GM10248 (cell line): ENCODE measurements at regions of chr12 and their contacts with region 1.

Region 1: DNA sequence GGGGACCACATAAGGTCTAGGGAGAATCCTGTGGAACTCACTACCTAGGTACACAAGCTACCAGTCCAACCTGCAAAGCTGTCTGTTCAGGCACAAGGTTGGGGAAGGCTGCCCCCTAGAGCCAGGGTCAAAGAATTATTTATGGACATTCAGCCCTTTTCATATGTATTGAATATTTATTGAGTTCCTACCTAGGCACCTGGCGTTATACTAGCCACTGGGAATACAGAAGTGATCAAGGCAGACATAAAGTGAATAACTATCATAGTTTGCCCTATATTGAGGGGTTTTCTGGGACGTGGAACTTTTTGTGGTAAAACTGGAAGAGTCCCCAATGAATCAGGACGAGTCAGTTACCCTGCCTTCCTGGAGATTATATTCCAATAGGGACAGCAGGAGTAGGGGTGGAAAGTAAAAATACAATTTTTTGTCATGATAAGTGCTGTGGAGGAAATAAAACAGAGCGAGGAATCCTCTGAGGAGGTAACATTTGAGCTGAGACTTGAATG is 5.8 kb upstream of the SLC48A1 start:
- DNase-seq: peak; percentile 71
- CTCF ChIP-seq: peak; percentile 83

Region 2: DNA sequence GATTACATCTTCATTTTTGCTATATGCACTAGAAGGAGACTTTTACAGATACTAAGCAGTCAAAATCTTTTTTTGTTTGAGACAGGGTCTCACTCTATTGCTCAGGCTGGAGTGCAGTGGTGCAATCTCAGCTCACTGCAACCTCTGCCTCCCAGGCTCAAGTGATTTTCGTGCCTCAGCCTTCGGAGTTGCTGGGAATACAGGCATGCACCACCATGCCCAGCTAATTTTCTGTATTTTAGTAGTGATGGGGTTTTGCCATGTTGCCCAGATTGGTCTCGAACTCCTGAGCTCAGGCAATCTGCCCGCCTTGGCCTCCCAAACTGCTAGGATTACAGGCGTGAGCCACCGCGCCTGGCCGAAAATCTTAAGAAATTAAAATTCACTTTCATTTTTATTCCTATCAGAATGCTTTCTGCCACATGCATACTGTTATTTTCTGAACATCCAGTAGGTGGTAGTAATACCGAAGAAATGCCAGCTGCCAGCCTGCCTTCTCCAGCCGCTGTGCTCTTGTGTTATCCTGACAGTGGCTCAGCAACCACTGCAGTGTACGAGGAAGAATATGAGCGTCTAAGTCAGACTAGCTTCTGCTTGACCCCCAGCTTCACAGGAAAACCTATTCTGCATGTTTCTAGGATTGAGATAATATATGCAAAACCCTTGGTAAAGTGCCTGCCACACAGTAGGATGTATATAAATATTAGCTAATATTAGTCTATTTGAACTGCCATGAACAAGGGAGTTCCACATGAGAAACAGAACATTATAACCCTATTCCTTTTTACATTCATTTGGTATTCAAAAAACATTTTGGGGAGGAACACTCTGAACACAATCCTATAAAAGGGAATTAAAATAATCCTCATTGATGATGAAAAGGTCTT is 115.7 kb before region 1 on chr12:
- CTCF ChIA-PET with region 1: interaction called, 27 read pairs
- POLR2A ChIA-PET with region 1: no interaction called
- DNase-seq: peak; percentile 34
- CTCF ChIP-seq: peak; percentile 56

Region 3: DNA sequence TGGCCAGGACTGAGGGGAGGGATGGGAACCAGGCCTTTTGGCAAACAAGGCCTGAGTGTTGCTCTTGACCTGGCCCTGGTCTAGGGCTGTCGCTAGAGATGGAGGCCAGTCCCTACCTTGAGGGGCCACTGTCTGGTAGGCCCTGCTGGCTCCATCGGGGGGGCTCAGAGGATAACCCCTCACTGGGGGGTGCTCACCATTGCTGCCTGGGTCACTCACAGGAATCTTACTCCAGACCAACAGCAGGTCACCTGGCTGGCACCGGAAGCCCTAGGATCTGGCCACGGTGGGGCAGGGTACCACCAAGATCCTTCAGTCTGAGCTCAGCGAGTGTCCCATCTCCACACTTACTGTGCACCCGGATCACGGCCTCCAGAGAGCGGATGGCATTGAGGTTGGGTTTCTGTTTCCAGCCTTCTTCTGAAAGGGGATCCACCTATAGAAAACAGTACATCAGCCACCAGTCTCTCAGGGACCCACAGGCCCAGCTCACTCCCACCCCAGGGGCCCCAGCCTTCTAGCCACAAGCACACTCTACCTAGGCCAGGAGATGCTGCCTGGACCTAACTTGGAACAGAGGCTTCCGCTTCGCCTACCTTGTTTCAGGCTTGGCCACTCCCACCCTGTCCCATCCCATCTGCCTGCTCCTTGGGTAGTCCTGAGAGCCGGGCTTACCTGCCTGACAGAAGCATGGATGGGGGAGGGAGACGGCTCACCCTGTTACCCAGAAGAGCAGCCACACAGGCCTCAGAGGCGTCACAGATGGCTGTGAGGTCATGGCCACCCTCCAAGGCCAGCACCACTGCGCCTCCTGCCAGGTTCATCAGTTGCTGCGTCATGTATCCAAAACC is 18.0 kb after region 1 on chr12:
- CTCF ChIA-PET with region 1: interaction called, 379 read pairs
- POLR2A ChIA-PET with region 1: no interaction called
- DNase-seq: no peak
- CTCF ChIP-seq: no peak

Region 4: GRCh38 chr12:47803191-47803875 is 36.1 kb after region 1 on chr12:
- CTCF ChIA-PET with region 1: interaction called, 14 read pairs
- POLR2A ChIA-PET with region 1: no interaction called
- DNase-seq: no peak
- CTCF ChIP-seq: no peak

Region 5: DNA sequence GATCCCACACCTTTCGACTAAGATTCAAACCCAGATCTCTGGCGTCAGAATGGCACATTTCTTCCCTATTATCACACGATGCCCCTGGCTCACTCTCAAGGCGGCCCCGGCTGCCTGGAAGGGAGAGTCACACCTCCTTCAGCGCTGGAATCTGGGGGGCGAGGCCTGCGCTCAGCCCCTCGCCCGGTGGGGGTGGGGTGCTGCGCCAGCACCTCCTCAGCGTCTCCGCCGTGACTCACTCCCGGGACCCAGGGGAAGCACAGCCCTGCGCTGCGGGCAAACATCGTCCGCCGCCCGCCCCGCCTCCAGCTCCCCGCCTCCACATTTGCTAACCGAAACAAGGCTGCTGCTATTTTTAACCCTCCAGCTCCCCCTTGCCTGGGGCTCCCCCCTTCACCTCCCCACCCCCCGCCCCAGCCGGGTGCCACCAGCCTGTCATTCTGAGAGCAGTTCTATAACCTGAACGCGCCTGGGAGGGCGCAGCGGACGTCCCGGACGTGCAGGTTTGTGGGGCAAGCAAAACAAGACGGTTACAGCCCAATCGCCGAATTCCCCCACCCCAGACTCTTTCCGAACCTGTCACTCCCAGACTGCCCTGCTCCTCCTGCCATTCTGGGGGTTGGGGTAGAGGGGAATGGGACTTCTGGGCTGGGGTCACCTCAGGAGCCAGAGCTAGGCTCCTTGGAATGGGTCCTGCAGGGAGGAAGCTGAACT is 45.7 kb after region 1 on chr12:
- CTCF ChIA-PET with region 1: interaction called, 14 read pairs
- POLR2A ChIA-PET with region 1: no interaction called
- DNase-seq: peak; percentile 93
- CTCF ChIP-seq: no peak

Region 6: DNA sequence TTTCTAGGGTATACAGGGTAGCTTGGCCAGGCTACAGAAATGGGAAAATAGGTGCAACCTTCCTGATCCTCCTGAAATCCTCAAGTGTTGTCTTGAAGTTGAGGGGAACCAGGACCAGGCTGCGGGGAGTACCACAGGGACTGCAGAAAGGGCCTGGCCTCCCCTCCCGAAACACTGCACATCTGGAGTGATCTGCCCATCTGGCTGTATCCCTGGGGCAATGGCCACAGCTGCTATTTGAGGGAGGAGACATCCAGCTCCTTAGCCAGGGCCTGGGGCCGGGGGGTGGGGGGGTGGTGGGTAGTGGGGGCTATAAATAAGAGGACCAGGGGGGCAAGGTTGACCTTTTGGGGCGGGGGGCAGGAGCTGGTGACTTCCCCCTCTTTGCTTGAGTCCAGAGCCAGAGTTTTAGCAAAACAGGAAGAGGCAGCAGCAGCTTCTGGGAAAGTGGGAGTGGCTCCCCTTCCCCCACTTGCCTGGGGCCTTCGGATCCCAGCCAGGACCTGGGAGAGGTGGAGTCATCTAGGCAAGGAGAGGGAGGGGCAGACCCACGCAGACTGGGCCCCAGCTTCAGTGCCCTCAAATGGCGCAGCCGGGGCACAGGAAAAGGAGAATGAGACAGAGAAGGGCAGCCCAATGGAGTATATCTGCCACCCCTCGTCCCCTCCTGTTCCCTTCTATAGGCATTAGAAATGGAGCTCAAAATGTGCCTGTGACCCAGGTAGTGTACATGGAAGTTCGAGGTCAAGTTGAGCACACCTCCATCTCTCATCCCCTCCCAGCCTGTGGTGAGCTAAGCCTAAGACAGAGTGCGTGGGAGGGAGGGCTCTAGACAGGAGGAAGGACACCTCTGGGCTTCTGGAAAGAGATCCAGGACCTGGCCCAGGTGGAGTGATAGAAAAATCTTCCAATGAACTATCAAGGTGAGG is 61.6 kb after region 1 on chr12:
- CTCF ChIA-PET with region 1: interaction called, 28 read pairs
- POLR2A ChIA-PET with region 1: no interaction called
- DNase-seq: no peak
- CTCF ChIP-seq: no peak

Region 7: DNA sequence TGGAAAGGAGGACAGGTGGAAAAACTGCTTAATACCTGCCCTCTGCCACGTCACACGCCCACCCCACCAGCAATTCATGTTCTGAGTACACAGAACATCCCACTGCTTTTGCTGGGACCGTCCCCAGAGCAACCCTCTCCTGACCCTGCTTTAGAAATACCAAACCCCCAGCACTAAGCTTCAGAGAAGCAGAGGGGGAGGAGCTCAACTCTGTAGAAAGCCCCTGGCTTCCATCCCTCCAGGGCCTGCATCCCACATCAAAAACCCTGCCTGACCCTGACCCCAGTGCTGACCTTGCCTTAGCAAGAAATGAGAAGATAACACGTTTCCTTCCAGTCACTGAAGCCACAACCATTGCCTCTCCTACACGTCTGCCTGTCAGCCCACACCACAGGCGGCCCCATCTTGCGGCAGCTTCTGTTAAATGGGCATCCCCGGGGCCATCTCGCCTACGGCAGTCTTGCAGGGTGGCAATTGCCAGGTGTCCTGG is 117.8 kb after region 1 on chr12:
- CTCF ChIA-PET with region 1: no interaction called
- POLR2A ChIA-PET with region 1: no interaction called
- DNase-seq: peak; percentile 71
- CTCF ChIP-seq: no peak

Region 8: GRCh38 chr12:48078901-48079300 is 311.6 kb after region 1 on chr12:
- CTCF ChIA-PET with region 1: no interaction called
- POLR2A ChIA-PET with region 1: no interaction called
- DNase-seq: no peak
- CTCF ChIP-seq: no peak